ENCODE measurements at regions of chr3 and their contacts with region 1.

Region 1: DNA sequence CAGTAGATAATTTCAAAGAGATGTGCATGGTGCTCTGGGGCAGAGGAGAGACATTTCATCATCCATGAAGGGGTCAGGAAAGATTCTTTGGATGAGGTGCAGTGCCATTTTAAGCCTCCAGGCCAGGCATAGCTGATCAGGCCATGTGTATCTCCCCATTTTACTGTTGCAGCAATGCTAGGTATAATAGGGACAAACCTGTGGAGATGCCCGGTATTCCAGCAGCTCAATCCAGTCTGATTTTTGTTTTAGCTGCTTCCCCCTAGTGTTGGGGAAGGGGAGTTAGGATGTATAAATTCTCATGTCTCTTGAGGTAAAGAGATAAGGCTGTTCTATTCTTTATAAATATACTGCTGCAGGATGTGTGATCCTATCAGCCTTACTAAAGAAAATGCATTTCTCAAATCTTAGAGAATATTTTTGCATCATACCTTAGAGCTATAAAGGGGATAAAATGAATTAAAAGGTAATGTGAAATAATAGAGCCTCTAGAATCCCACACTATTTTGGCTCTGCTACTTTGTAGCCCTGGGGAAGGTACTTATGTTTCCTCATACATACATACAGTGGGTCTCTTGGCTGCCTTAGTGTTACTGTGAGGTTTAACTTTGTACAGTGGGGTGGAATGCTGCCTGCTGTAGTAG is 5.2 kb downstream of the CDV3 start:
- DNase-seq: no peak
- H3K4me3 ChIP-seq: no peak overlapping the region
- H3K27ac ChIP-seq: no peak overlapping the region
- H3K4me1 ChIP-seq: peaks cover 15 to 64% (median 39%) of the 10 kb centered on the region in 4 donors
- H3K27me3 ChIP-seq: no peaks in the 10 kb centered on the region
- CTCF ChIP-seq: peak; percentile 34 to 53 (median 46)
- EP300 ChIP-seq: no peak
- POLR2A ChIP-seq: no peak

Region 2: GRCh38 chr3:132486086-132486485 is 1092.6 kb before region 1 on chr3:
- in situ Hi-C with region 1: no loop called
- intact Hi-C with region 1: no loop called
- DNase-seq: no peak
- H3K4me3 ChIP-seq: no peak overlapping the region
- H3K27ac ChIP-seq: no peak overlapping the region
- H3K4me1 ChIP-seq: peaks cover 0 to 35% (median 4%) of the 10 kb centered on the region in 4 donors
- H3K27me3 ChIP-seq: no peaks in the 10 kb centered on the region
- CTCF ChIP-seq: no peak
- EP300 ChIP-seq: no peak
- POLR2A ChIP-seq: no peak

Region 3: GRCh38 chr3:132695422-132695821 is 883.2 kb before region 1 on chr3:
- in situ Hi-C with region 1: loop called in 1 of 4 experiments (anchors 25 kb)
- intact Hi-C with region 1: no loop called
- DNase-seq: no peak
- H3K4me3 ChIP-seq: no peak overlapping the region
- H3K27ac ChIP-seq: no peak overlapping the region
- H3K4me1 ChIP-seq: peaks cover 0 to 15% (median 0%) of the 10 kb centered on the region in 4 donors
- H3K27me3 ChIP-seq: no peaks in the 10 kb centered on the region
- CTCF ChIP-seq: no peak
- EP300 ChIP-seq: no peak
- POLR2A ChIP-seq: no peak

Region 4: DNA sequence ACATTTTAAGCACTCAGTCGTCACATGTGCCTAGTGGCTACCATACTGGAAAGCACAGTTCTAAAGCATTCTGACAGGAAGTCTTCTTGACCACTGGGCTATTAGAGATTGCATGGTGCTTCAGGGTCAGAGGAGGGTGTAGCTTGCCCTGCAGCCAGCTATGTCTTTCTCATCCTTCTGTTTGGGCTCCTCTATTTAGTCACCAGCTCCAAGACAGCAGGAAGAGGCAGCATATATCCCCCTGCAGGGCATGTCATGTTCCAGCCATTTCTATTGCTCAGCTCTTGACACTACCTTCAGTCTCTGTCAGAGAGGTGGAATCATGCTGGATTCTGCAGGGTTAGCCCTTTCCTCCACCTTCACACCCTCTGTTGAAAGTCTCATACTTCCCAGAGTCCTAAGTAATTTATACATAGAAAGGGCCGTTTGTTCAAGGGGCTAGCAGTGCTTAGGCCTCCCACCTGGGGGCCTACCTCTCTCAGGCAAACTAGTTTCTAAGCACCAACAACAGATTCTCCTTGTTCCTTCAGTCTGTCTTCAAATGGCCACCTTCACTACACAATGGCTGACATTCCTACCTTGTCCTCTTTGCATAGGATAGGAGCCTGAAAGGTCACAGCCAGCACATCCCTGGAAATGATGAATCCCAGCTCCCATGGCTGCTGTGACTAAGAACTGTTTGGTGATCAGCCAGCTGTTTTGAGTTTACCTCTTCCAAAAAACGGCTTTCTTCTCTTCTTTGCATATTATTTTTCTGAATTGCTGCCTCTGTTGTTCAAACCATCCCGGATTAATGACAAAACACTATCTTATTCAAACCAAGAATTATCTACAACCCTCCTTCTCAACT is 294.5 kb before region 1 on chr3:
- in situ Hi-C with region 1: no loop called
- intact Hi-C with region 1: no loop called
- DNase-seq: no peak
- H3K4me3 ChIP-seq: no peak overlapping the region
- H3K27ac ChIP-seq: no peak overlapping the region
- H3K4me1 ChIP-seq: no peaks in the 10 kb centered on the region
- H3K27me3 ChIP-seq: no peaks in the 10 kb centered on the region
- CTCF ChIP-seq: no peak
- EP300 ChIP-seq: no peak
- POLR2A ChIP-seq: no peak